Activated CD4-positive, alpha-beta T cell treated with anti-CD3 and anti-CD28 coated beads, Interleukin-2, amount 10 ng/mL, durations not matched to agents 24 days and 14 days (primary cell): ENCODE measurements at regions of chr3 and their contacts with region 1.

Region 1: GRCh38 chr3:134794950-134795745 is at the start of gene EPHB1:
- DNase-seq: peak; percentile 92
- H3K4me3 Mint-ChIP-seq: peak within 1 kb of the TSS; percentile 91
- H3K27ac Mint-ChIP-seq: peak within 1 kb of the TSS; percentile 58
- H3K4me1 Mint-ChIP-seq: peaks cover 16% of the 10 kb centered on the region
- H3K27me3 Mint-ChIP-seq: peaks cover 72% of the 10 kb centered on the region
- total RNA-seq, gene EPHB1: 1.6 and 2.3 TPM in 2 replicates

Region 2: GRCh38 chr3:134838599-134838998 is 43.5 kb after region 1 on chr3:
- intact Hi-C with region 1: loop called (anchors 1 kb)
- DNase-seq: no peak
- H3K4me3 Mint-ChIP-seq: no peak overlapping the region
- H3K27ac Mint-ChIP-seq: no peak overlapping the region
- H3K4me1 Mint-ChIP-seq: no peaks in the 10 kb centered on the region
- H3K27me3 Mint-ChIP-seq: peaks cover 11% of the 10 kb centered on the region

Region 3: DNA sequence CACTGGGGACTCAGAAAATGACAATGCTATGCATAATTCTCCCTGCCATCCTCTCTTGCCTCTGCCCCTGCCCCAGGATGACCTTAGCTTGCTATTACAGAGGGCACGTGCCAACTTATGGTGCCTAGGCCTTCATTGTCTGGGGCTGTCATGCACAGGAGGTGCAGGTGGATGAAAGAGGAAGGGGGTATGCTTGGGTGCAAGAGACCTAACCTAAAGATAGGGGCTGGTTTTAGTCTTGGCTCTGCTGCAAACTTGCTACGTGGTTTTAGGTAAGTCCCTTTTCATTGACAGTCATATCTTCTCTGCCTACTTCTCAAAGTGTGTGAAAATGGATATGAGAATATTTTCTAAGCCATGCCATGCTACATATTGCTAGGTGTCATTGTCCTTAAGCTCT is 161.2 kb after region 1 on chr3:
- intact Hi-C with region 1: no loop called
- DNase-seq: no peak
- H3K4me3 Mint-ChIP-seq: no peak overlapping the region
- H3K27ac Mint-ChIP-seq: no peak overlapping the region
- H3K4me1 Mint-ChIP-seq: no peaks in the 10 kb centered on the region
- H3K27me3 Mint-ChIP-seq: no peaks in the 10 kb centered on the region

Region 4: DNA sequence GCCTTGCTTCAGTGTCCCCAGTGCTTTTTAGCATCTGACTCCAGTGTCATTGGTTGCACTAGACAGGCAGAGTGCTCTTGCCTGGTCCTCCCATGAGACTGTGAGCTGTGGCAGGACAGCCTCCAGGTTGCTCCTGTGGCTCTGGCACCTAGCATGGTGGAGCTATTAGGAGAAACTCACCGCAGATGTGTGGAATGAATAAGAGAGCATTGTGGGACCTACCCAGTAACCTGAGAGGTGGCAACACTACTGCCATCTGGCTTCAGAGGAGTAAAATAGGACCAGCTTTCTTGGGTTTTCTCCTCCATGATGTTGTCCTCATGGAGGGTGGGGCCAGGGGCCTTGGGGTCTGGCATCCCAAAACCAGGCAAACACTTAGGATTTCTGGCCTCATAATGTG is 183.5 kb after region 1 on chr3:
- intact Hi-C with region 1: loop called (anchors 10 kb)
- DNase-seq: no peak
- H3K4me3 Mint-ChIP-seq: no peak overlapping the region
- H3K27ac Mint-ChIP-seq: no peak overlapping the region
- H3K4me1 Mint-ChIP-seq: no peaks in the 10 kb centered on the region
- H3K27me3 Mint-ChIP-seq: no peaks in the 10 kb centered on the region

Region 5: GRCh38 chr3:135503760-135504686 is 708.9 kb after region 1 on chr3:
- intact Hi-C with region 1: loop called (anchors 5 kb)
- DNase-seq: peak; percentile 75
- H3K4me3 Mint-ChIP-seq: no peak overlapping the region
- H3K27ac Mint-ChIP-seq: no peak overlapping the region
- H3K4me1 Mint-ChIP-seq: no peaks in the 10 kb centered on the region
- H3K27me3 Mint-ChIP-seq: no peaks in the 10 kb centered on the region

Region 6: DNA sequence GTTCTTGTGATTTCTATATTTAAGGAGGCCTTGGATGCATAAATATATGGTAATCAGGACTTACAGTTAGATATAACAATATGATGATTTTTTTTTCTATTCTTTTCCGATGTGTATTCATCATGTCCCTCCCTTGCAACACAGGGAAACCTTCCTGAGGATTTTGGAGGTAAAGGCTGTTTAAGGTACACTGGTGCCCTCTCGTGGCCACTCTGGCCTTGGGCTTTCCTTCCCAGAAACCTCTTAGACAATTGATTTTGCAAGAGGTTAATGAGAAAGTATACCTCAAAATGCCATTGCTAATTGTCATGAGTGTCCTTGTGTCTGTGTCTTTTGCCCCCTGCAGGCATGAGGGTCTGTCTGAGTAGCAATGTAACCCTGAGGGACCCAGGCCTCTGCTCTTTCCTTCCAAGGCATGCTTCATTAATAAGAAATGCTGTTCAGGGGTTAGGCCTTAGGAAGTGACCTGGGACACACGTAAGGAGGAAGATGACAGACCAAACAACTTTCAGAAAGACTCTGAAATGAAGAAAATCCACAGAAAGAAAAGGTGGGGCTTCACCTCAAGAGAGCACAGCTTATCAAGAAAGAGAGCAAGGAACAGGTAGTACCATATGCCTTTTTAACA is 1100.1 kb after region 1 on chr3:
- intact Hi-C with region 1: loop called (anchors 1 kb)
- DNase-seq: peak; percentile 79
- H3K4me3 Mint-ChIP-seq: no peak overlapping the region
- H3K27ac Mint-ChIP-seq: no peak overlapping the region
- H3K4me1 Mint-ChIP-seq: no peaks in the 10 kb centered on the region
- H3K27me3 Mint-ChIP-seq: peaks cover 1% of the 10 kb centered on the region

Region 7: GRCh38 chr3:136042608-136043221 is 1247.6 kb after region 1 on chr3:
- intact Hi-C with region 1: loop called (anchors 2 kb)
- DNase-seq: no peak
- H3K4me3 Mint-ChIP-seq: no peak overlapping the region
- H3K27ac Mint-ChIP-seq: no peak overlapping the region
- H3K4me1 Mint-ChIP-seq: no peaks in the 10 kb centered on the region
- H3K27me3 Mint-ChIP-seq: peaks cover 6% of the 10 kb centered on the region